Activated T-helper 1 cell treated with anti-CD3 and anti-CD28 coated beads, Interleukin-12 subunit alpha, Interleukin-12 subunit beta, Interleukin-2, Interleukin-4 antibody, amounts not matched to agents 30 ng/mL and 10 ng/mL and 1 ng/mL, durations not matched to agents 14 hours and 24 hours and 36 hours (primary cell): ENCODE measurements at regions of chr6 and their contacts with region 1.

Region 1: DNA sequence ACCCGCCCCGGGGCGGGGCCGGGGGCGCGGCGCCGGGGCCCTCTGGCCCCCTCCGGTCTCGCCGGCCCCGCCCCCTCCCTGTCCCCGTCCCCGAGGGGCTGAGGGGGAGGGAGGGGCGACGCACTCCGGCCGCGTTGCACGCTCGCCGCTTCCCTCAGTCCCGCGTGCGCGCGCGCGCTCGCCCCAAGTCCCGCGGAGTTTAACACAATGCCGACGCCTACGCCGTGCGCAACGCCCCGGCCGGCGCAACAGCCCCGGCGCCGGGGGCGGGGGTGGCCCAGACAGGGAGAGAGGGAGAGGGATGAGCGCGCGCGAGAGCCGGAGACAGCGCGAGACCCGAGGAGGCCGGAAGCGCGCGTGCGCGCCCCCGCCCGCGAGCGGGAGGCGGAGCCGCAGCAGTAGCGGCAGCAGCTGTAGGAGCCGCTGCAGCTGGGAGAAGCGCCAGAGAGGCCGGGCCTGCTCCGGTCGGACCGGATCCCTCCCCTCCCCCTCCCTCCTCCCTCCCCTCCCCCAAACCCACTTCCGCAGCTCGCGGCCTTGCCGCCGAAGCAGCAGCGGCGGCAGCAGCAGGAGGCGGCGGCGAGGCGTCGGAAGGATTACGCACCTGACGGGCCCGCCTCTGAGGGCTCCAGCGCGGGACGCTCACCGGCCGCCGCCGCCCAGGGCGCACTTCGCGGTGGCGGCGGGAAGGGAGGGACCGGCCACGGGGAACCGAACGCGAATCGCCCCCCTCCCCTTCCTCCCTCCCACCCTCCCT is 905 bp downstream of the ZBTB2 start:
- DNase-seq: peak; percentile 99
- H3K4me3 Mint-ChIP-seq: peak overlapping the region; percentile 39
- H3K27ac Mint-ChIP-seq: peak overlapping the region; percentile 65
- H3K4me1 Mint-ChIP-seq: peaks cover 68% of the 10 kb centered on the region
- H3K27me3 Mint-ChIP-seq: no peaks in the 10 kb centered on the region

Region 2: DNA sequence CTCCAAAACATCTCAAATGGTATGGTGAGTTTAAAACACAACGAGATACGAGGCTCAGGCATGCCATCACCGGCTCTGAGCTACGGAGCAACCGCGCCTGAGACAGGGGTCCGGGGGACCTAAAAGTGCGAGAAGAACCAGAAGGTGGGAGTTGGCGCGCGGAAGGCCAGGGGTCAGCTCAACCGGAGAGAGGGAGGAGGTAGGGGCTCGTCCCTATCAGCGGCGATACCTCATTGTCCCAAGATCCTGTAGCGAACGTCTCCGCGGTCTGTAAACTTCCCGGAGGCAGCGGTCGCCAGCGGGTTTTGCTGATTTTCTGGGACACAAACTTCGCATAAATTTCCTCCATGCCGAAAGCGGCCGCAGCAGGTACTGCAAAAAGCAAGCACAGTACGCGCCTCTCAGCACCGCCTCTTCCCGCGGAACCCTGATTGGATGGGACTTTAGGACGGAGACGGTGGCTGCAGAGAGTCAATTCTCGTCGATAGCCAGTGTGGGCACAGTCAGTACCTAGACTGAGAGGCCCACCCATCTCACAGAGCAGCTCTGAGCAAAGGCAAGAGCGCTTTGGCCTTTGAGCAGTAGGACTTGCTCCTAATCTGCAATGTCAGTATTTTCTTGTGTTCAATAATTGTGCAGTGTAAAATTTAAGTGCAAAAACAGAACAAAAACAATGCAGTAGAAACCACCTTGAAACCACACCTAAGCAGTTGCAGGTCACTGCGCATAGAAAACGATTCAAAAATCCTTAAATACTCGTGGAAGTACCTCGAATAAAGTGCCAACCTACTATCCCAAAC is 1644.1 kb before region 1 on chr6 and contains the start of gene NUP43:
- intact Hi-C with region 1: loop called (anchors 2 kb)
- DNase-seq: peak; percentile 90
- H3K4me3 Mint-ChIP-seq: peak within 1 kb of the TSS; percentile 99
- H3K27ac Mint-ChIP-seq: peak within 1 kb of the TSS; percentile 87
- H3K4me1 Mint-ChIP-seq: peaks cover 31% of the 10 kb centered on the region
- H3K27me3 Mint-ChIP-seq: no peaks in the 10 kb centered on the region
- total RNA-seq, gene NUP43: 81.3 and 90.5 TPM in 2 replicates

Region 3: DNA sequence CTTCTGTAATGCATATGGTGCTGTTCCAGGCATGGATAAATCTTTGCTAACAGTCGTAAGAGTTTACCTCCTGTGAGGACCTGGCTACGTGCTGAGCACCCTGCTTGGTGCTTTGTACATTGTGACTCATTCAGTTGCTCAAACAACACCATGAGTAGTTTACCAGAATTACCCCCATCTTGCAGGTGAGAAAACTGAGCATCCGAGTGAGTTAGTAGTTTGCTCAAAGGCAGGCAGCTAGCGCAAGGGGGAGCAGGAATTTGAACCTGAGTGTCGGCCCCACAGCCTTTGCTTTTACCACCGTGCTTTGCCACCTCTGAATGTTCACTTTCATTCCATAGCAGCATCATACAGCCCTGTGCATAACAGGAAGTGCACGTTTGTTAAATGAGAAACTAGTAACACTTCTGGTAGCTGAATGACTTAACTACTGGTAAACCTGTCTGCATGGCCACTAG is 403.1 kb before region 1 on chr6:
- intact Hi-C with region 1: loop called (anchors 5 kb)
- DNase-seq: peak; percentile 57
- H3K4me3 Mint-ChIP-seq: peak overlapping the region; percentile 60
- H3K27ac Mint-ChIP-seq: peak overlapping the region; percentile 96
- H3K4me1 Mint-ChIP-seq: peaks cover 28% of the 10 kb centered on the region
- H3K27me3 Mint-ChIP-seq: no peaks in the 10 kb centered on the region

Region 4: GRCh38 chr6:151276112-151276745 is 114.2 kb before region 1 on chr6:
- intact Hi-C with region 1: no loop called
- DNase-seq: no peak
- H3K4me3 Mint-ChIP-seq: no peak overlapping the region
- H3K27ac Mint-ChIP-seq: no peak overlapping the region
- H3K4me1 Mint-ChIP-seq: no peaks in the 10 kb centered on the region
- H3K27me3 Mint-ChIP-seq: peaks cover 25% of the 10 kb centered on the region

Region 5: GRCh38 chr6:151409260-151409659 is 18.8 kb after region 1 on chr6:
- intact Hi-C with region 1: loop called (anchors 2 kb)
- DNase-seq: no peak
- H3K4me3 Mint-ChIP-seq: no peak overlapping the region
- H3K27ac Mint-ChIP-seq: peak overlapping the region; percentile 56
- H3K4me1 Mint-ChIP-seq: peaks cover 13% of the 10 kb centered on the region
- H3K27me3 Mint-ChIP-seq: no peaks in the 10 kb centered on the region

Region 6: DNA sequence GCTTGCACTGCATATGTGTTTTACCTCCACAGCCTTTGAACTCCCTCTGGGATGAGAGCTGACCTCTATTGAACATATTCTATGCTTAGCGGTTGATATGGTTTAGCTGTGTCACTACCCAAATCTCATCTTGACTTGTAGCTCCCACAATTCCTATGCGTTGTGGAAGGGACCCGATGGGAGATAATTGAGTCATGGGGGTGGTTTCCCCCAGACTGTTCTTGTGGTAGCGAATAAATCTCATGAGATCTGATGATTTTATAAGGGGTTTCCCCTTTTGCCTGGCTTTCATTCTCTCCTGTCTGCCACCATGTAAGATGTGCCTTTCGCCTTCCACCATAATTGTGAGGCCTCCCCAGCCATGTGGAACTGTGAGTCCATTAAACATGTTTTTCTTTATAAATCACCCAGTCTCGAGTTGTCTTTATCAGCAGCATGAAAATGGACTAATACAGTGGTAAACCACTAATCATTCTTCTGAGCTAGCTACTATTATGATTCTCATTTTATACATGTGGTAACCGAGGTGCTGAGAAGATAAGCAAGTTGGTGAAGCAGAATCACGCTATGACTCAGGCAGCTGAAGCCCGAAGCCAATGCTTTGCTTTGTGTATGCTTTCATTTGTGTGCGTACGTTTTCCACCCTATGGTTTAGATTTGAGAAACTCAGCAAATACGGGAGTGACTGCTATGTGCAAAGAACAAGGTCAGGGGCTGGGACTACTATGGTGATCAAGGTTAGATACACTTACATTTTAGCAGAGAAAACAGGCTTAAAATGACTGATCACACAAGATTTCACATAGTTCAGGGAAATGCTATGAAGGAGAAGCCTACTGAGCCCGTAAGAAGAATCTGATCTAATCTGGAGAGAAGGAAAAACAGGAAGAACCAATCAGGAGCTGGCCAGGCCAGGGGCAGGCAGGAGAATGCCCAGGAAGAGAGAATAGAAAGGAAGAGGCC is 780.5 kb after region 1 on chr6:
- intact Hi-C with region 1: loop called (anchors 1 kb)
- DNase-seq: peak; percentile 62
- H3K4me3 Mint-ChIP-seq: peak overlapping the region; percentile 59
- H3K27ac Mint-ChIP-seq: peak overlapping the region; percentile 95
- H3K4me1 Mint-ChIP-seq: peaks cover 25% of the 10 kb centered on the region
- H3K27me3 Mint-ChIP-seq: no peaks in the 10 kb centered on the region

Region 7: DNA sequence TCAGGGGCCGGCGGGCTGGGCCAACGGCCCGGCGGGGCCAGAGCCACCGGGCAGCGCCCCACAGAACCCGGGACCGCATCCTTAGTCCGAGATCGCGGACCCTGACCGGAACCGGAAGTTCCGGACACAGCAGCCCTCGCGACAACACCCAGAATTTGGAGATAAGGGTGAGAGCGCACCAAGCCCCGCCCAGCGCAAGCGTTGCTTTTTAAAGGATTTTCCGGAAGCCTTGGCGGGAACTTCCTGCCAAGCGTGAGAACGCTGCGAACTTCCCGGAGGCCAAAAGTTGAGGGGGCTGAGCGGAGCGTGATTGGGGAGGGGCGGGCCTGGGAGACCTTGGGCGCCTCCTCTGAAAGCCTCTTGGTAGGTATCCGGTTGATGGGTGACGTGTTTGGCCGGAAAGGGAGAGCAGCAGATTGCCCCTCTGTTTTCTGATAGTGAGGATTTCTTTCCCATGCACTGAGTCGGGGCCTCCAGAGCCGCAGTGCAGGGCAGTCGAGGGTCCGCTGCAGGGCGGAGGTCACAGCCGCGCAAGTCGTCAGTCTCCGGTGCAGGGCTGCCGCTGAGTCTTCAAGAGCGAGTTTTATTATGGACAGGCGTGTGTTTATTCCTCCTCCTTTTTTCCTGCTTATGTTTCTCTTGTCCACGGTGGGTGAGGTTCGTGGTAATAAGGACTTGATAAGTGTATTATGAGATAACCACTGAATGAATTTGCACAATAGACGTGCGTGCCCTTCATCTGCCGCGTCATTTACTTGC is 1612.3 kb after region 1 on chr6 and contains the start of gene MTRF1L:
- intact Hi-C with region 1: loop called (anchors 1 kb)
- DNase-seq: peak; percentile 81
- H3K4me3 Mint-ChIP-seq: peak within 1 kb of the TSS; percentile 98
- H3K27ac Mint-ChIP-seq: peak within 1 kb of the TSS; percentile 91
- H3K4me1 Mint-ChIP-seq: peaks cover 51% of the 10 kb centered on the region
- H3K27me3 Mint-ChIP-seq: peaks cover 10% of the 10 kb centered on the region
- total RNA-seq, gene MTRF1L: 22.7 and 23.2 TPM in 2 replicates